Endothelial cell of umbilical vein (primary cell): ENCODE measurements at regions of chr5 and their contacts with region 1.

Region 1: GRCh38 chr5:112492291-112492690 is 73.2 kb upstream of the EPB41L4A start:
- DNase-seq: peak; percentile 92
- H3K4me3 ChIP-seq: no peak overlapping the region
- H3K27ac ChIP-seq: no peak overlapping the region
- H3K4me1 ChIP-seq: no peaks in the 10 kb centered on the region
- H3K27me3 ChIP-seq: peaks cover 0 to 4% of the 10 kb centered on the region in 2 experiments
- CTCF ChIP-seq: peak; percentile 77 to 84
- POLR2A ChIP-seq: no peak

Region 2: GRCh38 chr5:112025757-112026156 is 466.5 kb before region 1 on chr5:
- CTCF ChIA-PET with region 1: no interaction called
- POLR2A ChIA-PET with region 1: no interaction called
- dilution Hi-C with region 1: no loop called
- intact Hi-C with region 1: no loop called
- DNase-seq: no peak
- H3K4me3 ChIP-seq: no peak overlapping the region
- H3K27ac ChIP-seq: no peak overlapping the region
- H3K4me1 ChIP-seq: no peaks in the 10 kb centered on the region
- H3K27me3 ChIP-seq: no peaks in the 10 kb centered on the region
- CTCF ChIP-seq: no peak
- POLR2A ChIP-seq: no peak

Region 3: GRCh38 chr5:112472614-112473013 is 19.7 kb before region 1 on chr5:
- CTCF ChIA-PET with region 1: interaction called, 14 read pairs
- POLR2A ChIA-PET with region 1: no interaction called
- dilution Hi-C with region 1: no loop called
- intact Hi-C with region 1: loop called (anchors 1 kb)
- DNase-seq: peak; percentile 91
- H3K4me3 ChIP-seq: no peak overlapping the region
- H3K27ac ChIP-seq: peak overlapping the region; percentile 33
- H3K4me1 ChIP-seq: peaks cover 20% of the 10 kb centered on the region
- H3K27me3 ChIP-seq: no peaks in the 10 kb centered on the region
- CTCF ChIP-seq: no peak
- POLR2A ChIP-seq: no peak

Region 4: GRCh38 chr5:112479407-112479806 is 12.9 kb before region 1 on chr5:
- CTCF ChIA-PET with region 1: interaction called, 14 read pairs
- POLR2A ChIA-PET with region 1: no interaction called
- dilution Hi-C with region 1: no loop called
- intact Hi-C with region 1: no loop called
- DNase-seq: peak; percentile 76
- H3K4me3 ChIP-seq: no peak overlapping the region
- H3K27ac ChIP-seq: no peak overlapping the region
- H3K4me1 ChIP-seq: peaks cover 5% of the 10 kb centered on the region
- H3K27me3 ChIP-seq: no peaks in the 10 kb centered on the region
- CTCF ChIP-seq: no peak
- POLR2A ChIP-seq: no peak

Region 5: GRCh38 chr5:112977440-112977861 is 485.2 kb after region 1 on chr5:
- CTCF ChIA-PET with region 1: no interaction called
- POLR2A ChIA-PET with region 1: no interaction called
- dilution Hi-C with region 1: no loop called
- intact Hi-C with region 1: no loop called
- DNase-seq: peak; percentile 48
- H3K4me3 ChIP-seq: peak overlapping the region; percentile 98 to 99 (median 99)
- H3K27ac ChIP-seq: peak overlapping the region; percentile 48
- H3K4me1 ChIP-seq: peaks cover 21% of the 10 kb centered on the region
- H3K27me3 ChIP-seq: no peaks in the 10 kb centered on the region
- CTCF ChIP-seq: no peak
- POLR2A ChIP-seq: no peak